Activated CD4-positive, alpha-beta T cell treated with anti-CD3 and anti-CD28 coated beads, Interleukin-2, amount 10 ng/mL, durations not matched to agents 24 days and 14 days (primary cell): ENCODE measurements at regions of chr12 and their contacts with region 1.

Region 1: DNA sequence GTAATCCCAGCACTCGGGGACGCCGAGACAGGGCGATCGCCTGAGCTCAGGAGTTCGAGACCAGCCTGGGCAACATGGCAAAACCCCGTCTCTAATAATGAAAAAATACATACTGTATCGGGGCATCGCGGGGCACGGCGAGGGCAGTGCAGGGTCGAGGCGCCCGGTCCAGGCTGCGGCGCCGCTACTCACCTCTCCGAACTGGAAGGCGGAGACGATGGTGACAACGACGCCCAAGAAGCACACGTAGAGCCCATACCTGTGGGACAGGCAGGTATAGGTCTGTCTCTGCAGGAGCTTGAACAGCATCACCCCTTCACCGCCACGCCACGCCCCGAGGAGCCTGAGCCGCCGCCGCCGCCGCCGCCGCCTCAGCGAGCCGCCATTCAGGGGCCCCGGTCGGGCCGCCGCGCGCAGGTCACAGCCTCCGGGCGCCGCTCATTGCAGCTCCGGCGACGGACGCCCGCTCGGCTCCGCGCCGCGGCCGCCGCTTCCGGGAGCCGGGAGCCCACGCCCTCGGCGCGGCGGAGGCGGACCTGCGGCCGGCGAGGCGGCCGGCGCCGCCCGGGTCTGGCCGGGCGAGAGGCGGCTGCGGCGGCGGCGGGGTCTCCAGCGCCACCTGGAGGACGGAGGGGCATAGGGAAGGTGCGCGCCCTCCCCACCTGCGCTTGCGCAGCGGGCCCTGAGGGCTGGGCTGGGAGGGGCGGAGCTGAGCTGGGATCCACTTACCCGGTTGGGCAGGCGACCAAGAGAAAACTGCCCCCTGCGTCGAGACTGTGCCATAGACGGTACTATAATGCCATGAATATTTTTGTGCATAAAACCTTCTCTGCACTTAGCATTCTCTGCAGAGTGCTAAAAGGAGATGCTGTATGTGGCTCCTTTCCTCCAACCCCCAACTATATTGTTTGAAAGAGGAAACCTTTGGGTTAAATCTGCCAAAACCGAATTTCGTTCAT is at the start of gene GNPTAB:
- DNase-seq: peak; percentile 98
- H3K4me3 Mint-ChIP-seq: peak within 1 kb of the TSS; percentile 96
- H3K27ac Mint-ChIP-seq: peak within 1 kb of the TSS; percentile 92
- H3K4me1 Mint-ChIP-seq: peaks cover 37% of the 10 kb centered on the region
- H3K27me3 Mint-ChIP-seq: no peaks in the 10 kb centered on the region
- total RNA-seq, gene GNPTAB: 48.2 and 57.2 TPM in 2 replicates

Region 2: DNA sequence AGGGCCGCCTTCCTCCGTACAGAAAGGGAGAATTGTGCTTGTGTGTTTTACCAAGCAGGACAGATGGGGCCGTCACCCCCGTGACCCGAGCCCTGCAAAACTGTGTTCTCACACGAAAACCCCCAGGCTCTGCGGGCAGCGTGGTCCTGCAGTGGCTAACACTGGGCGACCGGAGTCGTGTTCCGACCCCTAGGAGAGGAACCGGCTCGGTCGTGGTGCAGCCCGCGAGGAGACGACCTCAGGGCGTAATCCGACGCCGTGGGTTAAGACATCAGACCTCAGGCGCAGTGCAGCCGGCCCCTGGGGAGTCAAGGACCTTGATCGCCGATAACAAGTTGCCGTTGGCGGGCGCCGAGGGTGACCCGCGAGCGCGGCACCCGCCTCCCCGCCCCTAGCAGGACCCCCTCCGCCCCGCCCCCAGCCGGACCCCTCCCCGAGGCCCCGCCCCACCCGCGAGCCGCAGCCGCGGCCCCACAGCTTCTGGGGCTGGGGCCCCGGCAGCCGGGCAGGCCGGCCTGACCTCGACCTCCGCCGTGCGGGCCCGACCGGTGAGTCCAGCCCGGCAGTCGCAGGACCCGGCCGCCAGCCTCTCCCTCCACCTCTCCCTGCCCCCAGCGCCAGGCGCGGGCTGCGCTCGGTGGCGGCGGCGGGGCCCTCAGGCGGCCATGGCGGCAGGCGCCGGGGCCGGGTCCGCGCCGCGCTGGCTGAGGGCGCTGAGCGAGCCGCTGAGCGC is 133.3 kb before region 1 on chr12 and contains the start of gene CHPT1:
- intact Hi-C with region 1: loop called (anchors 5 kb)
- DNase-seq: peak; percentile 85
- H3K4me3 Mint-ChIP-seq: peak within 1 kb of the TSS; percentile 89
- H3K27ac Mint-ChIP-seq: peak within 1 kb of the TSS; percentile 78
- H3K4me1 Mint-ChIP-seq: peaks cover 18% of the 10 kb centered on the region
- H3K27me3 Mint-ChIP-seq: peaks cover 23% of the 10 kb centered on the region
- total RNA-seq, gene CHPT1: 13.9 and 15.3 TPM in 2 replicates

Region 3: GRCh38 chr12:101782273-101782731 is 48.3 kb before region 1 on chr12:
- intact Hi-C with region 1: loop called (anchors 2 kb)
- DNase-seq: no peak
- H3K4me3 Mint-ChIP-seq: peak overlapping the region; percentile 9
- H3K27ac Mint-ChIP-seq: peak overlapping the region; percentile 91
- H3K4me1 Mint-ChIP-seq: peaks cover 31% of the 10 kb centered on the region
- H3K27me3 Mint-ChIP-seq: no peaks in the 10 kb centered on the region

Region 4: GRCh38 chr12:101819467-101819866 is 11.2 kb before region 1 on chr12:
- intact Hi-C with region 1: loop called (anchors 1 kb)
- DNase-seq: no peak
- H3K4me3 Mint-ChIP-seq: peak overlapping the region; percentile 67
- H3K27ac Mint-ChIP-seq: peak overlapping the region; percentile 93
- H3K4me1 Mint-ChIP-seq: peaks cover 49% of the 10 kb centered on the region
- H3K27me3 Mint-ChIP-seq: no peaks in the 10 kb centered on the region